ENCODE measurements at regions of chr14 and their contacts with region 1.

Region 1: DNA sequence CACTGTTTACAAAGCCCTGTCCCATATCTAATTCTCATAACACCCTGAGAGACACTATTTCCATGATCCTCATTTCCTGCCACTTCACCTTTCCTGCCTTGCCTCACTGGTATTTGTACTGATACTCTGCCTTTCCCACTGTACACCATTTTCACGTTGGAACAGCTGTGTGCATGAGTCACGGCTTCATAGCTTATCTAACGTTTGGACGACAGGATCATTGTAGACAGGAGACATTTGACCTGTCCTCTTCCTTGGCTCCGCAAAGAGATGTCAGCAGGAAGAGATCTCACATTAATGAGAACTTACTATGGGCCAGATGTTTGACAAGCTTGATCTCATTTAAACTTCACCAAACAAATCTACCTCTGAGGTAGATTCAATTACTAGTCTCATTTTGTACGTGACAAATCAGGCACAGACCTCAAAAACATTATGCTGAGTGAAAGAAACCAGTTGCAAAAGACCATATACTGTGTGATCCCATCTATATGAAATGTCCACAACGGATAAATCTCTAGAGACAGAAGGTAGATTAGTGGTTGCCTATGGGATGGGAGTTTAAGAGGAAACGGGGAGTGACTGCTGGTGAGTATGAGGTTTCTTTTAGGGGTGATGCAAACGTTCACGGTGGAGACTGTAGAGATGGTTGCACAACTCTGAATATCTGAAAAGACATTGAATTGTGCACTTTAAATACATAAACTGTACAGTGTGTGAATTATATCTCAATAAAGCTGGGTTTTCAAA is 71.2 kb downstream of the KCNK13 start:
- DNase-seq: no peak
- ATAC-seq: no peak
- H3K4me3 ChIP-seq: no peak overlapping the region
- H3K27ac ChIP-seq: no peak overlapping the region
- H3K4me1 ChIP-seq: no peaks in the 10 kb centered on the region
- H3K27me3 ChIP-seq: peaks cover 0 to 13% (median 0%) of the 10 kb centered on the region in 7 donors
- CTCF ChIP-seq: no peak

Region 2: DNA sequence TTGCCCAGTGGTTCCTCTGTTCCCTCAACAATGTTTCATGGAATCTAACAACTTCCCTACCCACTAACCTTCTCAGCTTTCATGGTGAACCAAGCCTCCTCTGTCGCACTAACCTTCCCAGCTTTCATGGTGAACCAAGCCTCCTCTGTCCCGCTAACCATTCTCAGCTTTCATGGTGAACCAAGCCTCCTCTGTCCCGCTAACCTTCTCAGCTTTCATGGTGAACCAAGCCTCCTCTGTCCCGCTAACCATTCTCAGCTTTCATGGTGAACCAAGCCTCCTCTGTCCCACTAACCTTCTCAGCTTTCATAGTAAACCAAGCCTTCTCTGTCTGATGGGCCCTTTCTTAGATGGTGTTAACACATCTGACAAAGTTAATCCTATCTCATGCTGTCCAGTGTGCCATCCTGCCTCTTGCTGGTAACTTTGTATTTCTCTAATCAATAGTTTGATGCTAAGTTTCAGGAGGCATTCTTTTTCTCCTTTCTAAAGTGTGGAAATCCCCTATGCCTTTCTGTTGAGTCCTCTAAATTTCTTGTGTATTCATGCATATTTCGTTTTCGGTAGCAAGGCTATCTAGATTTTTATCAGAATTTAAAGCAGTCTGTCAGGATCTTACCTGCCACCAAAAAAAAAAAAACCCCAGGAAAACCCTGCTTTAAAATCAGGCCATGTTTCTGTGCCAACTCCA is 98.0 kb before region 1 on chr14:
- intact Hi-C with region 1: no loop called
- DNase-seq: no peak
- ATAC-seq: no peak
- H3K4me3 ChIP-seq: no peak overlapping the region
- H3K27ac ChIP-seq: no peak overlapping the region
- H3K4me1 ChIP-seq: no peaks in the 10 kb centered on the region
- H3K27me3 ChIP-seq: no peaks in the 10 kb centered on the region
- CTCF ChIP-seq: no peak

Region 3: GRCh38 chr14:90109646-90110257 is 23.2 kb before region 1 on chr14:
- intact Hi-C with region 1: loop called in 1 of 10 experiments (anchors 2 kb)
- DNase-seq: no peak
- ATAC-seq: no peak
- H3K4me3 ChIP-seq: no peak overlapping the region
- H3K27ac ChIP-seq: no peak overlapping the region
- H3K4me1 ChIP-seq: no peaks in the 10 kb centered on the region
- H3K27me3 ChIP-seq: peaks cover 0 to 23% (median 0%) of the 10 kb centered on the region in 7 donors
- CTCF ChIP-seq: peak in 2 of 9 donors; percentile 14 to 19

Region 4: GRCh38 chr14:90168425-90169105 is 35.6 kb after region 1 on chr14:
- intact Hi-C with region 1: loop called in 1 of 10 experiments (anchors 1 kb)
- DNase-seq: no peak
- ATAC-seq: no peak
- H3K4me3 ChIP-seq: no peak overlapping the region
- H3K27ac ChIP-seq: no peak overlapping the region
- H3K4me1 ChIP-seq: no peaks in the 10 kb centered on the region
- H3K27me3 ChIP-seq: no peaks in the 10 kb centered on the region
- CTCF ChIP-seq: no peak

Region 5: DNA sequence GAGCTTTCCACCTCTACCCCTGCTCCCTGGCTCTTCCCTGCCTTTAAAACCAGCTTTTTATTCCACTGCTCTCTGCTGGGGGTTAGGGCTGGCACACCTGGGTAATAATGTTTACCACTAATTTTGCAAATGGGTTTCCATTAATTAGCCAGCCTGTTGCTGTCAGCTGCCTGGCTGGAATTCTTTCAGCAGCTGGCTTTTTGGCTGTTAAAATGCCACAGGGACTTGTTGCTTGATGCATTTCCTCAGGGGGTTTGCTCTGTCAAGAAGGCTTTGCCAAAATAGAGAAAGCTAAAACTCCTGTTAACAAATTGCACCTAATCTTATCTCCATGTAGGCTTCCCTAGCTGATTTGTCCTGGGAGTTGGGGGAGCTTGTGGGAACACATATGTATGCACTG is 71.5 kb after region 1 on chr14:
- intact Hi-C with region 1: no loop called
- DNase-seq: no peak
- ATAC-seq: no peak
- H3K4me3 ChIP-seq: no peak overlapping the region
- H3K27ac ChIP-seq: no peak overlapping the region
- H3K4me1 ChIP-seq: no peaks in the 10 kb centered on the region
- H3K27me3 ChIP-seq: peaks cover 0 to 9% (median 0%) of the 10 kb centered on the region in 7 donors
- CTCF ChIP-seq: no peak